Sciatic nerve (tissue), 2 donors: ENCODE measurements at regions of chr20 and their contacts with region 1.

Region 1: DNA sequence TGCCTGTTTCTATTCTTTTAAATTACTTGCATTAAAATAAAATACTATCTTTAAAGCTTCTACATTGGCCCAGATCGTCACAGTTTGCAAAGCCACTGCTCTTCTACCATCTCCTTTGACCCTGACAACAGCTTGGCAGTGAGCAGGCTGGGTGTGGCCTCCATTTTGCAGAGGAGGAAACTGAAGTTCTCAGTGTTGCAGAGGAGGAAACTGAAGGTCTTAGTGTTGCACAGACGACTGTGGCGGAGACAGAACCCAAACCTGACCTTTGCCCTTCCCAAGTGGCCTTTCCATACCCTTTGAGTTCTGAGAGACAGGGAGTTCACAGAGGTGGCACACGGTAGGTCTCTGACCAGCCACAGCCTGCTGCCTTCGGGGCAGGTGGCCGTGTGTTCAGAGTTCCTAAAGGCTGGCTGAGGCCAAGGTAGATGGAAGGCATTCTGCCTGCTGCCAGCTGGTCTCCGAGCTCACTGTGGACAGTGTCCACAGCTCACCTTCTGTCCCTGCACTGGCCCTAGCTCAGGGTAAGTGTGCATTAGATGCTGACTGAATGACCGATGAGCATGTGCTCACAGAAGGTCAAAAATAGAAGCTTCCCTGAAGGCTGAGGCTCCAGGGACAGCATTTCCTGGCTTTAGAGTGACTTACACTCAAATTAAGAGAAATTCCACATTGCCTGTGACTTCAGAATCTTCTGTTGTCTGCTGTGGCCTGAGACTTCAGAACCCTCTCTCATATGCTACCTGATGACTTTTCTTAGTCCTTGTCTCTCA is 113.5 kb upstream of the SLC24A3 start:
- DNase-seq: no peak
- ATAC-seq: no peak

Region 2: DNA sequence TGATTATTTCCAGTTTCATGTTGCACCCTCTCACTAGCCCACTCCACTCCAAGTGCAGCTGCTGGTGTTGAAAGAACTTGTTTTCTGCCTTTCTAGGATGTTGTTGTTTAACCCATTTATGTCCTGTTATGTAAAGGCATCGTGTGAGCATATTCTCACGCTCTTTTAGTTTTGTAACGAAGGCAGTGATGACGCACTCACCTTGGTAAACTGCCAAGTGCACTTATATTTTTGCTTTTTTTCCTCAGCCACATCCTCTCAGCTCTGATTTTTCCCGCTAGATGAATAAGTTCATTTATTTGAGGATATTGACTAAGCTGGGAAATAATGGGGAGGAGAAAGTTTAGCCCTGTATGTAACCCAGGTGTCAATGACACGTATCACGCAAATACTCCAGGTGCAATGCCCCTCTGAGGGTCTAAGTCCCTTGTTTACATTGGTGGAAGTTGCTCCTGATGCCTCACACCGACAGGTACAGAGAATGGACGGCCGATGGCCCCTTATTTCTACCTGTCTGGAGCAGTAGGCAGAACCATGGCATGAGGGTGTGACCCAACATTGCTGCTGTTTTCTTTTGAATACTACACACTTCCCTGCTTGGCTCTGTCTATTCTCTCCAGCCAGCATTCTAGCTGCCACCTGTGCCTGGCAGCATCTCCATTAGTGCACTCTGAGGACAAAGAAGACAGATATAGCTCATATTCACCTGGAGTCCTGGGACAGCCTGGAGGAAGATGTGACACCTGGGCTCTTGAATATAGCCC is 19.3 kb before region 1 on chr20:
- intact Hi-C with region 1: loop called (anchors 1 kb)
- DNase-seq: no peak
- ATAC-seq: no peak